Activated naive CD4-positive, alpha-beta T cell treated with anti-CD3 and anti-CD28 coated beads for 36 hours (primary cell): ENCODE measurements at regions of chr3 and their contacts with region 1.

Region 1: DNA sequence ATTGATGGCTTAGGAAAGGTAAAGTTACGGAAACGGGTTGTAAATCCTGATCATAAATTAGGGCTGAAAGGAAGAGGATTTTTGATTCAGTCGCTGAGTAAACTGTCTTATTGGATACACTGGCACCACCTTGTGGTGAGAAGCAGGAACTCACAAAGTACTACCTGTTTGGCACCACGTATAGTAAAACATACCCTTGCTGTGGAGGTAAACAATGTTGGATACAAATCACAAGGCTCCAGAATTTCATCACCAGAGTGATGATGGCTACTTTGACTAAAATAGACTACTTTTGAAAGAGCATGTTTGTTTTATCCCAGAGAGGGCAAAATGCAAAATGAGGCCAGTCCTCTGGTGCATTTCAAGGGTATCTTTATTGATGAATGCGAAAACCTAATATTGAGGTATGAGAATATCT is 216.9 kb downstream of the IGSF11 start:
- DNase-seq: peak; percentile 59
- H3K4me3 Mint-ChIP-seq: no peak overlapping the region
- H3K27ac Mint-ChIP-seq: no peak overlapping the region
- H3K4me1 Mint-ChIP-seq: no peaks in the 10 kb centered on the region
- H3K27me3 Mint-ChIP-seq: peaks cover 3% of the 10 kb centered on the region

Region 2: GRCh38 chr3:117997201-117998049 is 820.3 kb before region 1 on chr3:
- CTCF ChIA-PET with region 1: no interaction called
- intact Hi-C with region 1: loop called (anchors 5 kb)
- DNase-seq: peak; percentile 62
- H3K4me3 Mint-ChIP-seq: no peak overlapping the region
- H3K27ac Mint-ChIP-seq: no peak overlapping the region
- H3K4me1 Mint-ChIP-seq: no peaks in the 10 kb centered on the region
- H3K27me3 Mint-ChIP-seq: peaks cover 11% of the 10 kb centered on the region

Region 3: DNA sequence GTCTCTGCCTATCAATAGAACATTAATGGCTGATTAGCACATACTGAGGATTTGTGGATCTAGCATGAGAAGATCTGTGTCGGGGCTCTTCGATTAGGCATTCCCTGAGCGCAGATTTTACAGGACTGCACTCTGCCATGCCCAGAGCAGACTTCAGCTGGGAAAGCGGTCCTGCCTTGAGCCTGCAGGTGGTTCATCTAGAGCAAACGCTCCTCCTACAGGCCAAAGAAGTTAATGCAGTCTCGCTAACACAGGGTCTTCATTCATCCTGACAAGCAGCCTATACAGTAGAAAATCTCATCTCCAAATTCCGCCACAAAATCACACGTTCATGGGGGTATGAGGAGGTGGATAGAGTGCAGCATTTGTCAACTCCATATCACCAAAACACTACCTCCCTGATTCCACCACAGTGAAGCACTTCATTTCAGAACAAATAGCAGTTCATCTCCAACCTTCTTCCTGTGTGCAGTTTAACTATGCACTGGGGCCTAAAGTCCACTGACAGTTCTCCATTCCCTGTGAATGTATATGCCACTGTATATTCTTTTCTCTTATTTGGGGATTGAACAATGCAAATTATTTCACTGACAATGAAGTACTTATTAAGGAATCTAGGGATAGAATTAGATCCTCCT is 188.9 kb before region 1 on chr3:
- CTCF ChIA-PET with region 1: no interaction called
- intact Hi-C with region 1: loop called (anchors 1 kb)
- DNase-seq: peak; percentile 38
- H3K4me3 Mint-ChIP-seq: no peak overlapping the region
- H3K27ac Mint-ChIP-seq: no peak overlapping the region
- H3K4me1 Mint-ChIP-seq: no peaks in the 10 kb centered on the region
- H3K27me3 Mint-ChIP-seq: no peaks in the 10 kb centered on the region

Region 4: DNA sequence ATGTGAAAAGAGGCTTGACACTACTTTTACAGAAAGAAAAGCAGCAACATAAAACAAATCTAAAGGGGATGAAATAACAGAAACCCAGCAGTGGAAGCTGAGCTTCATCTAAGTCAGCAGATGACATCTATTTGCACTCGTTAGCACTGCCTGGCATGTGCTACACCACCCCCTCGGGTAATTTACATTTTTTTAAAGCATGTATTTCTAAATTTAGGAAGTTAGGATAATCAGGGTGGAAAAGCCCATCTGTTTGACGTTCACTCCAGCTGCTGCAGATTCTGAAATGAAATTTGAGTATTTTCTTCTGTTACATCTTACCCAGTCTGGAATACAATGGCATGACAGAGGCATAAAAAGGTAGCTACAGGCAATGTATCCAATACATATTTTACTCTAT is 196.2 kb after region 1 on chr3:
- CTCF ChIA-PET with region 1: no interaction called
- intact Hi-C with region 1: no loop called
- DNase-seq: no peak
- H3K4me3 Mint-ChIP-seq: no peak overlapping the region
- H3K27ac Mint-ChIP-seq: no peak overlapping the region
- H3K4me1 Mint-ChIP-seq: peaks cover 5% of the 10 kb centered on the region
- H3K27me3 Mint-ChIP-seq: no peaks in the 10 kb centered on the region